ENCODE measurements at regions of chr9 and their contacts with region 1.

Region 1: DNA sequence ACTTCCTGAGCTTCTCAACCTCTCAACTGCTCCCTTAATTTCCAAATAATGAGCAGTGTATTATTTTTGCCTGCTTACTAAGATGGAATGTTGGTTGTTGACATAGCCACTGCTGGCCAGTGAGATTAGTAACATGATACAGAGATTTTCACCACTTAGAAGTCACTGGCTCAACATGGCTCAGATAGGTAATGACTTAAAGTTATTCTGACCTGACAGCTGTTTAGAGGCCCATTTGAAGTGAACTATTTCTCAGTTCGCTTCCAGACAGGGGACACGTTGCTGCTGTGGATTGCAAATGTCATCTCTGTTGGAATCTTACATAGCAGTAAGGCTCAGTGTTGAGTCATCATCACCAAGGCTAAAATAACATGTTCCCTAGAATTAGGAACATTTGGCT is 490.2 kb downstream of the TLE4 start:
- DNase-seq: no peak
- ATAC-seq: peak; percentile 96 to 99 (median 96)
- H3K4me3 ChIP-seq: no peak overlapping the region
- H3K27ac ChIP-seq: peak overlapping the region; percentile 94
- H3K4me1 ChIP-seq: peaks cover 20% of the 10 kb centered on the region
- H3K27me3 ChIP-seq: no peaks in the 10 kb centered on the region
- CTCF ChIP-seq: no peak

Region 2: GRCh38 chr9:79975621-79976256 is 86.2 kb before region 1 on chr9:
- intact Hi-C with region 1: loop called (anchors 5 kb)
- DNase-seq: peak; percentile 25 to 85
- ATAC-seq: peak; percentile 85 to 97 (median 94)
- H3K4me3 ChIP-seq: peak overlapping the region; percentile 54
- H3K27ac ChIP-seq: peak overlapping the region; percentile 83
- H3K4me1 ChIP-seq: peaks cover 25% of the 10 kb centered on the region
- H3K27me3 ChIP-seq: no peaks in the 10 kb centered on the region
- CTCF ChIP-seq: peak; percentile 25

Measured in psoas muscle (tissue), 8 donors.